ENCODE measurements at regions of chr1 and their contacts with region 1.

Region 1: DNA sequence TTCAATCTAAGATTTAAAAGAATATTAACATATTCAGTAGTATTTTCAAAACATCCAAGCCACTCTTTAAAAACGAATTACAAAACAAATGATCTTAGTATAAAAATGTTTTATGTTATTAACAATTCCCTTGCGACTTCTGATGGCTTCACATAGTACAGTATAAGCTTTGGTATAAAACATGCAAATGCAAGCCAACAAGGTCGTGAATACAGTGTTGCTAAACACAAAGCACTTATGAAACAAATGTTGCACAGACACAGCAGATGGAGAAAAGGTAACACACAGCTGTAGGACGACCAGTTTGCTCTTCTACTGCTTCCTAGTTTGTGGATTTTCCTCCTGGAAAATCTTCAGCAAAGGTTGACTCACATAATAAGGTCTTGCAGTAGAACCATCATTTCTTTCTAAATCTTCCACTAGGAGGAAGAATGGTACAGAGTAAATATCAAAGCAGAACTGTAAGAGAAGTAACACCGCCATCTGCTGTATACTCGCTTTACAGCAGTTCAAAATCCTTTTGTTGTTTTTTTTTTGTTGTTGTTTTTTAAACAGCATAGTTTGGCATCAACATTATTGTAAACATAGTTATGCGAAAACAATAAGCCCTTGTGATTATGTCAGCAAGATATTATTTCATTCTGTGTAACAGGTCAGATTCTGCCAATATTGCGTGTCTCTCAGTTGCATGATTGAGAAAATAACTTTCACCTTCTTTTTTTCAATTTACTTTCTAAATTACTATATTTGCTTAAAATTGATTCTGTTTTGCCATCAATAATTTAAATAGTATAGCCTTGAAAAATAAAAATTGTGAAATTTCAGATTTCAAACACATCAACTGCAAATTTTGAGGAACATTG is 69.5 kb downstream of the LHX8 start:
- DNase-seq: peak; percentile 40
- ATAC-seq: peak; percentile 90
- H3K4me3 ChIP-seq: no peak overlapping the region
- H3K27ac ChIP-seq: no peak overlapping the region
- H3K4me1 ChIP-seq: no peaks in the 10 kb centered on the region
- H3K27me3 ChIP-seq: no peaks in the 10 kb centered on the region
- CTCF ChIP-seq: peak; percentile 73
- EP300 ChIP-seq: no peak
- POLR2A ChIP-seq: no peak
- RAD21 ChIP-seq: 0 out of 2 replicates have a peak, but pooled peaks have one; percentile 34

Region 2: GRCh38 chr1:74771913-74772515 is 431.6 kb before region 1 on chr1:
- CTCF ChIA-PET with region 1: interaction called, 57 read pairs
- POLR2A ChIA-PET with region 1: no interaction called
- in situ Hi-C with region 1: loop called (anchors 5 kb)
- intact Hi-C with region 1: loop called (anchors 1 kb)
- DNase-seq: peak; percentile 51
- ATAC-seq: peak; percentile 76
- H3K4me3 ChIP-seq: no peak overlapping the region
- H3K27ac ChIP-seq: no peak overlapping the region
- H3K4me1 ChIP-seq: no peaks in the 10 kb centered on the region
- H3K27me3 ChIP-seq: no peaks in the 10 kb centered on the region
- CTCF ChIP-seq: peak; percentile 76
- EP300 ChIP-seq: no peak
- POLR2A ChIP-seq: no peak
- RAD21 ChIP-seq: no peak

Region 3: DNA sequence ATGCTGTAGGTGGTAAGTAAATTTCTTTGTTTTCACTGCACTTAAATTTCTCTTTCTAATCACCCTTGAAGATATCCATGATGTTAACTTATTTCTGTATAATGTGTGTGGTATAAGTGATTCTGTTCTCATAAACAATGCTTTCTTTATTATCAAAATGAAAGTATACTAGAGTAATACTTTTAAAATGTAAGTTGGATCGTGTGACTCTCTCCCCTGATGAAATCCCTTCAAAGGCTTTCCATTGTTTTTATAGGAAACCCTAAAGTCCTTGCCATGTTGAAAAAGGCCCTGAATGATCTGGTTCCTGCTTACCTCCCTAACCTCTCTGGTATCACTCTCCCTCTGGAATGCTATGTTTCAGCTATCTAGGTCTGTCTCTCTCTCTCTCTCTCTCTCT is 260.6 kb before region 1 on chr1:
- CTCF ChIA-PET with region 1: no interaction called
- POLR2A ChIA-PET with region 1: no interaction called
- in situ Hi-C with region 1: no loop called
- intact Hi-C with region 1: loop called (anchors 10 kb)
- DNase-seq: no peak
- ATAC-seq: no peak
- H3K4me3 ChIP-seq: no peak overlapping the region
- H3K27ac ChIP-seq: no peak overlapping the region
- H3K4me1 ChIP-seq: no peaks in the 10 kb centered on the region
- H3K27me3 ChIP-seq: no peaks in the 10 kb centered on the region
- CTCF ChIP-seq: no peak
- EP300 ChIP-seq: no peak
- POLR2A ChIP-seq: no peak
- RAD21 ChIP-seq: no peak

Region 4: DNA sequence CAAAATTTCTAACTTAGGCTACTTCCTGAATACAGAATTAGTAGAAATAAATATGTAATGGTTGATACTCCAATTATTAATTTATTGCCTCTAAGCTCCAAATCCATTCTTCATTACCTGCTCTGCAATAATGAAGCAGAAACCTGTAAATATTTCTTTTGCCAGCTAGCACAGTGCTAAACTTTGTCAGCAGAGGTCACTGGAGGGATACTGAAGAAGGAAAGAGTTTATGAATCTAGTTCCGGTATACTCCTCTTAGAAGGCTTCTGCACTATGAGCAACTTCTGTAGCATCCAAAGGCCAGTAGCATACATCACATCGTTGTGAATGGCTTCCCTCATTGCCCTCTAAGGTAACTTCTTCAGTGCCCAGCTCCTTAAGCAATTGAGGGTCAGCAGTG is 150.4 kb before region 1 on chr1:
- CTCF ChIA-PET with region 1: no interaction called
- POLR2A ChIA-PET with region 1: no interaction called
- in situ Hi-C with region 1: no loop called
- intact Hi-C with region 1: loop called (anchors 5 kb)
- DNase-seq: no peak
- ATAC-seq: peak; percentile 63; the same call in 2 of the 3 replicates
- H3K4me3 ChIP-seq: no peak overlapping the region
- H3K27ac ChIP-seq: no peak overlapping the region
- H3K4me1 ChIP-seq: no peaks in the 10 kb centered on the region
- H3K27me3 ChIP-seq: no peaks in the 10 kb centered on the region
- CTCF ChIP-seq: 0 out of 2 replicates have a peak, but pooled peaks have one; percentile 21
- EP300 ChIP-seq: no peak
- POLR2A ChIP-seq: no peak
- RAD21 ChIP-seq: no peak

Region 5: GRCh38 chr1:75345538-75346292 is 142.1 kb after region 1 on chr1:
- CTCF ChIA-PET with region 1: no interaction called
- POLR2A ChIA-PET with region 1: no interaction called
- in situ Hi-C with region 1: no loop called
- intact Hi-C with region 1: no loop called
- DNase-seq: no peak
- ATAC-seq: no peak
- H3K4me3 ChIP-seq: no peak overlapping the region
- H3K27ac ChIP-seq: no peak overlapping the region
- H3K4me1 ChIP-seq: no peaks in the 10 kb centered on the region
- H3K27me3 ChIP-seq: no peaks in the 10 kb centered on the region
- CTCF ChIP-seq: no peak
- EP300 ChIP-seq: no peak
- POLR2A ChIP-seq: no peak
- RAD21 ChIP-seq: no peak